ENCODE measurements at regions of chr2 and their contacts with region 1.

Region 1: GRCh38 chr2:222860740-222861410 is at the start of gene ACSL3:
- DNase-seq: peak; percentile 97
- ATAC-seq: peak; percentile 100
- H3K4me3 Mint-ChIP-seq: peak within 1 kb of the TSS; percentile 67
- H3K27ac Mint-ChIP-seq: peak within 1 kb of the TSS; percentile 91
- H3K4me1 Mint-ChIP-seq: peaks cover 9% of the 10 kb centered on the region
- H3K27me3 Mint-ChIP-seq: peaks cover 4% of the 10 kb centered on the region
- total RNA-seq, gene ACSL3: 46.2 to 48.8 TPM

Region 2: DNA sequence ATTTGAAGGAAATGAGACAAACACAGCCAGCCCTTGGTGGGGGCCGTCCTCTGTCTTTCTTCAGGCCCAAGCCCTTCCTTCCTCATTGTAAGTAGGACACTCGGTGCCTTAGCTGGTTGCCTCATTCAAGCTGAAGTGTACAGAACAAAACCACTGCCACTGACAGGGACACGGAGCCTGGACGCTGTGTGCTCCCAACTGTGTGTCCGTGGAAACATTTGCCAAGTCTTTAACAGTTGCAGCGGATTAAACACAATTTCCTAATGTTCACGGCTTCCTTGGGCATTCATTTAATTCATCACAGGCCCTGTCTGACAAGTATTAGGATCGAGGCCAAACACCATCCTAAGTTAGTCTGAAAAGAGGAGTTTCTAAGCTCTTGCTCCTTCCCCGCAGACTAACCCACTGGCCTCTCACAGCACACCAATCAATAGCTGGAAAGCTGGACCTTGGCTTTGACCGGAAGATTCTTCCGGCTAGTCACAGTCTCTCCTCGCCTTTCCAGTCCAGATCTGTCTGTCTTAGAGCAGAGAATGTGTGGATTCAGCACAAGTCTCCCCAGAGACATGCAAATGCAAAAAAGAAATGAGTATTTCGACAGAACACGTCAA is 68.8 kb before region 1 on chr2:
- CTCF ChIA-PET with region 1: interaction called, 7 read pairs
- POLR2A ChIA-PET with region 1: interaction called, 3 read pairs
- intact Hi-C with region 1: loop called (anchors 1 to 5 kb)
- DNase-seq: no peak
- ATAC-seq: no peak
- H3K4me3 Mint-ChIP-seq: no peak overlapping the region
- H3K27ac Mint-ChIP-seq: no peak overlapping the region
- H3K4me1 Mint-ChIP-seq: peaks cover 16% of the 10 kb centered on the region
- H3K27me3 Mint-ChIP-seq: no peaks in the 10 kb centered on the region

Region 3: GRCh38 chr2:223674998-223675609 is 814.2 kb after region 1 on chr2:
- CTCF ChIA-PET with region 1: no interaction called
- POLR2A ChIA-PET with region 1: no interaction called
- intact Hi-C with region 1: no loop called
- DNase-seq: no peak
- ATAC-seq: no peak
- H3K4me3 Mint-ChIP-seq: no peak overlapping the region
- H3K27ac Mint-ChIP-seq: no peak overlapping the region
- H3K4me1 Mint-ChIP-seq: no peaks in the 10 kb centered on the region
- H3K27me3 Mint-ChIP-seq: peaks cover 8% of the 10 kb centered on the region